Left ventricle myocardium inferior (tissue), 1 donor: ENCODE measurements at regions of chr4 and their contacts with region 1.

Region 1: DNA sequence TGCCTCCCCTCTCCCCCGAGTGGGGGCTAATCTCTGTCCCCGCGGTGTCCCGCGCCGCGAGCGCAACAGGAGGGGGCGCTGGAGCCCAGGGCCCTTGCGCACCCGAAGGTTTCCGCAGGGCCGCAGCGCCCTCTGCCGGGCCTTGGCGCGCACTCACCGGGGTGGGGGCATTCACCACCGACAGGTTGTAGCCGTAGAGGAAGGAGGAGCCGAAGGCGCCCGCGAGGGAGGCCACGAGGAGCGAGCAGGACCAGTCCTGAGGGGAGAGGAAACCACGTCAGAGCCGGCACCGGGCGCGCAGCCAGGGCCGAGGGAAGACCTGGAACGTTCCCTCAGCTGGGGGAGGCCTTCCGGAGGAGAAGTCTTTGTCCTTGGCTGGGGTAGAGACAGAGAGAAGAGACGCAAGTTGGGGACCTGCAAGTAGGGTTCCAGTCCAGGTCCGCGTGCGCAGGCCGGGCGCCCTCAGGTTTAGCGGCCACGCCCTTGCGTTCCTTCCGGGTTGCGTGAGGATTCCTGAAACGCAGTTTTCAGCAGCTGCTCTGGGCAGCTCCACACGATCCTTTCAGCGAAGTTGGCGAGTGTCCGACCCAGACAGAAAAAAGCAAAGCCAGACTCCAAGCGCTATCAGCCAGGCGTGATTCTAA is 2.4 kb downstream of the SLC2A9 start:
- DNase-seq: peak; percentile 99
- H3K4me3 ChIP-seq: peak overlapping the region; percentile 66
- H3K27ac ChIP-seq: peak overlapping the region; percentile 98
- H3K4me1 ChIP-seq: peaks cover 60% of the 10 kb centered on the region
- H3K27me3 ChIP-seq: no peaks in the 10 kb centered on the region
- CTCF ChIP-seq: peak; percentile 98

Region 2: GRCh38 chr4:9859810-9860209 is 159.1 kb before region 1 on chr4:
- intact Hi-C with region 1: no loop called
- DNase-seq: no peak
- H3K4me3 ChIP-seq: no peak overlapping the region
- H3K27ac ChIP-seq: no peak overlapping the region
- H3K4me1 ChIP-seq: no peaks in the 10 kb centered on the region
- H3K27me3 ChIP-seq: no peaks in the 10 kb centered on the region
- CTCF ChIP-seq: no peak

Region 3: DNA sequence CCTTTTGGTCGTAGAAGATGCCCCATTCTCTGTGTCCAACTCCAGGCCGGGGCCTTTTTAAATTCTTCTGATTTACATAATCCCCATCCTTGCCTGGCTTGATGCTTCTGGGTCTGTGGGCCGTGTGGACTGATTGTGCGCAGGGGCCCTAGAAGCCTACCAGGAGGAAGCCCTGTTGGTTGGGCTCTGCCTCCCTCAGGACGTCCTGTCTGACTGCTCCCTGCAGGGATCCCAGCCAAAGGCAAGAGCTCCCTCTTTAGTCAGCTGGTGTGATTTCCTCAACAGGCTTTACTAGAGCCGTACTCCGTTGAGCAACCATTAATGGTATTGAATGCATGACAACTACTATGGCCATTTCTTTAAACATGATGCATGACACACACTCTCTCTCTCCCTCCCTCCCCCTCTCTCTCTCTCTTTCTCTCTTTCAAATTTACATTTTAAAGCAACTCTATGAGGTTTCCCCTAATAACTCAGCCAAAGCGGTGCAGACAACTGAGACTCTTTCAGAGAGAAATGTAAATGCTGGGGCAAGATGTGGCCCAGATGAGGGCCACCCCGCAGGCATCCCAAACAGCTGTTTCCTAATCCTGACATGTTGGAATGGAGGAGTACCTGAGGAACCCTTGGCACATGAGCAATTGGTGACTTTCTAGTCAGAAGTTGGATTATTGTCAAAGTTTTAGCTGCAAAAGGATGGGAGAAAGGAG is 120.2 kb before region 1 on chr4:
- intact Hi-C with region 1: loop called (anchors 10 kb)
- DNase-seq: peak; percentile 54
- H3K4me3 ChIP-seq: no peak overlapping the region
- H3K27ac ChIP-seq: no peak overlapping the region
- H3K4me1 ChIP-seq: peaks cover 17% of the 10 kb centered on the region
- H3K27me3 ChIP-seq: no peaks in the 10 kb centered on the region
- CTCF ChIP-seq: peak; percentile 67